ENCODE measurements at regions of chr1 and their contacts with region 1.

Region 1: DNA sequence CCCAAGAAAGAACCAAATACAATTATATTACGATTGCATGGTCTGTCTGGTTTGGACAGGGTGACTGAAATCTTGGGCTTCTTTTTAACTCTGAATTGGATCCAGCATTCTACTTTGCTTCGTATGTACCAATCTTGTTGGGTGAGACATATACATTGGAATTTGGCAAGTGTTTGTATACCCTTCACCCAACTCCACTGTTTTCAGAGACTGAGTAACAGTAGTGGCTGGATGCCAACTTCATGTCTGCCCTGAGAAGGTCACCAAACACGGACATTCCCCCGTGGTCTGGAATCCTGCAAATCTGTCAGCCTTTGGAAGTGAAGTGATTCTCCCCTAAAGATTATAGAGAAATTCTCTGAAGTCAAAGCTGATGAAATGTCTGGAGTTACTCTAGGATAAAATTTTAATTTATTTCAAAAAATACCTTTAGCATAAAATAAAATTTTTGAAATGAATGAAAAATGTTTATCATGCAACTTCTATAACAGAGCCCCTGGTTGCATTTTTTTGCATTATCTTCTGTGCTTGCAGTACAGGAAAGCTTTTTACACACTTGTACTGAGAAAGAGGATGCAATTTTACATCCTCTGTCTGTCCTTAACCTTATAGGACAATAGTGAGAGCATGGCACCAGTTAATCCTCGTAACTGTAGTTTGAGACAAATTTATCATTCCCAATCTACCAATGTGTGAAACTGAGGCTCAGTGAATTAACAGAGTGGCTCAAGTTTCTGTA is 201.8 kb downstream of the DISC1 start:
- DNase-seq: peak; percentile 96
- H3K4me3 ChIP-seq: no peak overlapping the region
- H3K27ac ChIP-seq: peak overlapping the region; percentile 92
- H3K4me1 ChIP-seq: peaks cover 29% of the 10 kb centered on the region
- H3K27me3 ChIP-seq: no peaks in the 10 kb centered on the region
- CTCF ChIP-seq: no peak
- POLR2A ChIP-seq: no peak

Region 2: DNA sequence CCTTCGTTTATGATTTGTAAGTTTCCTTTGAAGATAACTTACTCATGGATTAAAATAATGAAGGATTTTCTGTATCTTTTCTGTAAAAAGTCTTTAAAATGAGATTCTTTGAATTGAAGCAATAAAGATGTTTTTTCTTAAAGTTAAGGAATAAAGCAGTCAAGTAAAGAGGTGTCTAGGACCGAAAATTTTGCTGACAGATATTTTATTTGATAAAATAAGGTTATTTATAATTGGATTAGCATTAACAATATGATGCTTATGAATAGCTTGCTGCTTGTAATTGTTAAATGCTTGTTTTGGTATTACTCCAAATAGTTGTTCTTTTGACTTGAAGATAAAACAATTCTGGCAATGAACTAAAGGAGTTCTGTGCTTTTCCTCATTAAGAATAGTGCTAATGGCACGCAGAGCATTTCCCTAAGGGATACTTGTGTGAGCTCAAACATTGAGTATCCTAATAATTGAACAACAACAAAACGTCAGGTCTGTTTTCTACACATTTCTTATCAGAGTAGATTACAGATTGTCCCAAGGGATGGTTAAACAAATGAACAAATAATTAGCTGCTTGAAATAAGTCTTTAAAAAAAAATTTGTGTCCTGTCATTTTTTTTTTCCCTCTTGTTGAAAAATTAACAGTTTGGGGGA is 283.3 kb before region 1 on chr1:
- CTCF ChIA-PET with region 1: no interaction called
- POLR2A ChIA-PET with region 1: no interaction called
- dilution Hi-C with region 1: no loop called
- intact Hi-C with region 1: no loop called
- DNase-seq: peak; percentile 87
- H3K4me3 ChIP-seq: no peak overlapping the region
- H3K27ac ChIP-seq: peak overlapping the region; percentile 13
- H3K4me1 ChIP-seq: peaks cover 25% of the 10 kb centered on the region
- H3K27me3 ChIP-seq: no peaks in the 10 kb centered on the region
- CTCF ChIP-seq: no peak
- POLR2A ChIP-seq: no peak

Region 3: DNA sequence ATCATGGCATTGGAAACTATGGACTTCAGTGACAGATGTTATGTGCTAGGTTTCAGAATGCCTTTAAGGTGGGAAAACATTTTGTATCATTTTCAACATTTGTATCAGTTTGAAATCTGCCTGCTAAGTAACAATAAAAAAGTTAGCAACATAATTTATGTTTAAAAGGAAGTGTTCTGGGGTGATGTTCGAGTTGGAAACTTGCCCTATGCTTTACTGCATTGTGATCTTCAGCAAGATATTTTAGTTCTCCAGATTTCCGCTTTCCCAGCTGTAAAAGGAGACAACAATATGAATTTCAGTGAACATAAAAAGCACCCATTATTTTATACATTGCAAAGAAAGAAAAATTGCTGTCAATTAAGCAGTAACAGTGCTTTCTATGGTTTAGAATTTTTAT is 14.3 kb before region 1 on chr1:
- CTCF ChIA-PET with region 1: interaction called, 5 read pairs
- POLR2A ChIA-PET with region 1: no interaction called
- dilution Hi-C with region 1: no loop called
- intact Hi-C with region 1: loop called (anchors 1 kb)
- DNase-seq: peak; percentile 93
- H3K4me3 ChIP-seq: no peak overlapping the region
- H3K27ac ChIP-seq: peak overlapping the region; percentile 50
- H3K4me1 ChIP-seq: peaks cover 22% of the 10 kb centered on the region
- H3K27me3 ChIP-seq: no peaks in the 10 kb centered on the region
- CTCF ChIP-seq: no peak
- POLR2A ChIP-seq: no peak

Region 4: GRCh38 chr1:231931846-231932454 is 103.6 kb after region 1 on chr1:
- CTCF ChIA-PET with region 1: no interaction called
- POLR2A ChIA-PET with region 1: no interaction called
- dilution Hi-C with region 1: no loop called
- intact Hi-C with region 1: loop called (anchors 1 kb)
- DNase-seq: no peak
- H3K4me3 ChIP-seq: no peak overlapping the region
- H3K27ac ChIP-seq: no peak overlapping the region
- H3K4me1 ChIP-seq: peaks cover 20% of the 10 kb centered on the region
- H3K27me3 ChIP-seq: no peaks in the 10 kb centered on the region
- CTCF ChIP-seq: peak; percentile 42 to 53
- POLR2A ChIP-seq: no peak

Region 5: DNA sequence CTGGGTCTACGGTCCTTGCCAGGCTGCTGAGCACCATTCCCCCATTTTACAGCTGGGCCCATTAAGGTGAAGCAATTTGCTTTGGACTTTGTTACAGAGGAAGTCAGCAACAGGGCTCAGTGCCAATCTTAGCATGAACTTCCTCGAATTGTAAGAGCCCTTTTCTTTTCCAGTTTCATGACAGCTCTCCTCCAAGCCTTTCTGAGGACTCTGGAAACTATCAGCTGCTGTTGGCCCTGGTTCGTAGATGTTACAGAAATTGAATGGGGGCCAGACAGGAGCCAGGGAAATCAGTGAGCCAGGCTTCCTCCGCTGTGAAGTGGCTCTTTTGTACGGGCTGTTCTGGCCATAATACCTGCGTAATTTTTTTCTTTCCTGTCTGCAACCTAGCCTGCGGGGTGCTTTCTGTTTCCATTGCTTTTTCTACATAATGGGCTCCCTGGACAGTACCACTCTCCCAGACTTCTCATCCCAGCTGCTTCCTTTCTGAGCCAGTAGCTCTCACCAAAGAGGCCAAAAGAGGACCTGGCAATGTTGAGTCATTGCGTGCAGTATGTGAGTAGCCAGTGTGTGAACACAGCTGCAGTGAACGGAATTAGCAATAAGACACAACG is 184.5 kb after region 1 on chr1:
- CTCF ChIA-PET with region 1: no interaction called
- POLR2A ChIA-PET with region 1: no interaction called
- dilution Hi-C with region 1: no loop called
- intact Hi-C with region 1: loop called (anchors 1 kb)
- DNase-seq: peak; percentile 97
- H3K4me3 ChIP-seq: peak overlapping the region in 1 of 3 experiments; percentile 14
- H3K27ac ChIP-seq: peak overlapping the region; percentile 80
- H3K4me1 ChIP-seq: peaks cover 27% of the 10 kb centered on the region
- H3K27me3 ChIP-seq: no peaks in the 10 kb centered on the region
- CTCF ChIP-seq: no peak
- POLR2A ChIP-seq: no peak